SK-N-SH (cell line): ENCODE measurements at regions of chr10 and their contacts with region 1.

Region 1: GRCh38 chr10:112140110-112140970 is 43.2 kb downstream of the GPAM start:
- DNase-seq: peak; percentile 79
- H3K4me3 ChIP-seq: no peak overlapping the region; a peak in 1 of 4 replicates
- H3K27ac ChIP-seq: no peak overlapping the region
- H3K4me1 ChIP-seq: peaks cover 0 to 5% of the 10 kb centered on the region in 2 experiments; a peak in 1 of 4 replicates
- H3K27me3 ChIP-seq: no peaks in the 10 kb centered on the region
- CTCF ChIP-seq: peak; percentile 84
- EP300 ChIP-seq: no peak
- RAD21 ChIP-seq: peak; percentile 86

Region 2: GRCh38 chr10:111739125-111739873 is 401.0 kb before region 1 on chr10:
- CTCF ChIA-PET with region 1: interaction called, 11 read pairs
- POLR2A ChIA-PET with region 1: no interaction called
- DNase-seq: no peak
- H3K4me3 ChIP-seq: no peak overlapping the region
- H3K27ac ChIP-seq: no peak overlapping the region
- H3K4me1 ChIP-seq: no peaks in the 10 kb centered on the region
- H3K27me3 ChIP-seq: no peaks in the 10 kb centered on the region
- CTCF ChIP-seq: no peak
- EP300 ChIP-seq: no peak
- RAD21 ChIP-seq: no peak

Region 3: GRCh38 chr10:112092502-112092901 is 47.8 kb before region 1 on chr10:
- CTCF ChIA-PET with region 1: interaction called, 10 read pairs
- POLR2A ChIA-PET with region 1: no interaction called
- DNase-seq: no peak
- H3K4me3 ChIP-seq: no peak overlapping the region
- H3K27ac ChIP-seq: no peak overlapping the region; a peak in 1 of 4 replicates
- H3K4me1 ChIP-seq: peaks cover 0 to 7% of the 10 kb centered on the region in 2 experiments; a peak in 1 of 4 replicates
- H3K27me3 ChIP-seq: no peaks in the 10 kb centered on the region
- CTCF ChIP-seq: no peak
- EP300 ChIP-seq: no peak
- RAD21 ChIP-seq: no peak

Region 4: GRCh38 chr10:112122827-112123226 is 17.5 kb before region 1 on chr10:
- CTCF ChIA-PET with region 1: interaction called, 238 read pairs
- POLR2A ChIA-PET with region 1: interaction called, 10 read pairs
- DNase-seq: peak; percentile 32
- H3K4me3 ChIP-seq: no peak overlapping the region
- H3K27ac ChIP-seq: no peak overlapping the region
- H3K4me1 ChIP-seq: peaks cover 0 to 24% of the 10 kb centered on the region in 2 experiments; a peak in 1 of 4 replicates
- H3K27me3 ChIP-seq: no peaks in the 10 kb centered on the region
- CTCF ChIP-seq: no peak
- EP300 ChIP-seq: no peak
- RAD21 ChIP-seq: no peak

Region 5: DNA sequence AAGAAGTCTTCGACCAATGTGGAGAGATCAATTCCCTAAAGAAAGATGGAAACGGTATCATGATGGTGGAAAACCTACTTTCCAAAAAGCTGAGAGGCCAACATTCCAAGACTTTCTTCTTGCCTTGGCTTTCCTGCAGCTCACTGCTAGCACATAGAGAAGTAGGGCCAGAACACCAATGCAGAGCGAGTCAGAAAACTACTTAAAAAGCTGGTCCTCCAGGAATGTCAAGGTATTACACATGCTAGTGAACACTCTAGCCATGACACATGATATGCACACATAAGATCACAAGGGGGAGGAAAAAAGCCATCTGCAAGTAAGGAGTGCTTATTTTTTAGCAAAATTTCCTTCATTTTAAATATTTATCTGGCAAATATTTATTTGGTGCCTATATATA is 20.5 kb after region 1 on chr10:
- CTCF ChIA-PET with region 1: interaction called, 15 read pairs
- POLR2A ChIA-PET with region 1: no interaction called
- DNase-seq: no peak
- H3K4me3 ChIP-seq: no peak overlapping the region
- H3K27ac ChIP-seq: no peak overlapping the region
- H3K4me1 ChIP-seq: no peaks in the 10 kb centered on the region
- H3K27me3 ChIP-seq: no peaks in the 10 kb centered on the region
- CTCF ChIP-seq: no peak
- EP300 ChIP-seq: no peak
- RAD21 ChIP-seq: no peak

Region 6: DNA sequence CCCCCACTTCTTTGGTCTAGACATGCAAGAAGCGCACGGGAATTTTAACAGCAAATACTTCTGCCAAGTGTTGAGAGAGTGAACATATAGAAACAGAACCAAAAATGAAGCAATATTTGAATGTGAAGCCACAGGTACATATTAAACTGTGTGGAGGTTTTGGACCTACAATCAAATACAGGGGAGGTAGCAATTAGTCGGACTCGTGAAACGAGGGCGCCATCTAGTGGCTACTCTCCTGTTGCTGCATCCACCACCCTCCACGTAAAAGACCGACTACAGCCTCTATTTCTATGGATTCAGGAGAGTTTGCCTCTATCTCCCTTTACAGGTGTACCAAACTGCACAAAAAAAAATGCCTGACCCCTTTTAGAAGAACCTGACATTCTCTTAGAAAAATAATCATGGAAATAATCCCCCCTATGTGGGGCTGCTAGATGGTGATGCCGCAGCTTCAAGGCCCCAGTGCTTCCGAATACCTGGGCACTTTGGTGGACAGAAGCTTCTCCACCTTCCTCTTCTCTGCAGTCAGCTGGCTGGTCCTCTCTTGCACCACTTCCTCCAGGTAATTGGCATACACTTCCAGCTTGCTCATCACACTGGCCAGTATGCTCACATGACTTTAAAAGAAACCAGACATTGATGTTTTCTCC is 174.6 kb after region 1 on chr10:
- CTCF ChIA-PET with region 1: interaction called, 125 read pairs
- POLR2A ChIA-PET with region 1: no interaction called
- DNase-seq: peak; percentile 76
- H3K4me3 ChIP-seq: no peak overlapping the region; a peak in 1 of 4 replicates
- H3K27ac ChIP-seq: no peak overlapping the region
- H3K4me1 ChIP-seq: peaks cover 0 to 3% of the 10 kb centered on the region in 2 experiments; a peak in 1 of 4 replicates
- H3K27me3 ChIP-seq: no peaks in the 10 kb centered on the region
- CTCF ChIP-seq: peak; percentile 95
- EP300 ChIP-seq: no peak
- RAD21 ChIP-seq: peak; percentile 97